Common myeloid progenitor, CD34-positive (primary cell): ENCODE measurements at regions of chr1 and their contacts with region 1.

Region 1: DNA sequence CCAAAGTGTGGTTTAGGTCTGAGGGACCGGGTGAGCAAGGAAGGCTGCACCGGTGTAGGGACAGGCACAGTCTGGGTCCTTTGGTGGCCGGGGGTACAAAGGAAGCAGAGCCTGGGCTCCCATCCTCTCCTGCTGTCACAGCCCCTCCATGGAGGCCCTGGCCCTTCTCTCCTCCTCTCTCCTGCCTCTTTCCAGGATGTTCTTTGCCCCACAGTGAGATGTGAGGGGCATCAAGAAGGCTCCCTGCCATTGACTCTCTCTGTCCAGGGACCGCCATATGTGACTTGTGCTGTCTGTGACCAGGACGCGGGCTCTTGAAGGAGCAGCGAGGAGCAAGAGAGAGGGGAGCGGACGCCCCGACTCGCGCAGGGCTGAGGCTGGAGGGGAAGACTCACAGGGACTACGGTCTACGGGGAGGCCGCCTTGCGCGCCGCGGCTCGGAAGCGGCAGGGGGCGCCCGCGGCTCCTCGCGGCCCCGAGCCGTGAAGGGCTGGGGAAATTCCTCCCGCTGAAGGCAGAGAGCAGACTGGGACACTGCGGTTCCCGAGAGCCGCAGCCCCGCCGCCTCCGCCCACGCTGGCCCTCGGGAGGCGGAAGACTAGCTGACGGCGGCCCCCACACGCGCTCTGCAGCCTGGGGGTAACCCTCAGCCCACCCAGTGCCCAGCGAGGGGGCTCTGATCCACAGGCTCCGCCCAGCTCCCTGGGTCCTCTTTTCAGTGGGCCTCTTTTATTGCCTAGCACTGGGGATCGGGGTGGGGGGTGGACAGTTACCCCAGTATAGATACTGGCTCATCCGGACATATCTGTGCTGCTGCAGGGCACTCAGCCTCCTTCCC is 40.8 kb downstream of the MAB21L3 start:
- DNase-seq: peak; percentile 77 to 90 (median 89)
- H3K4me3 ChIP-seq: peak overlapping the region; percentile 35 to 77 (median 59)
- H3K27ac ChIP-seq: no peak overlapping the region
- H3K4me1 ChIP-seq: peaks cover 0 to 7% (median 4%) of the 10 kb centered on the region in 4 experiments
- H3K27me3 ChIP-seq: peaks cover 0 to 3% (median 0%) of the 10 kb centered on the region in 5 experiments

Region 2: DNA sequence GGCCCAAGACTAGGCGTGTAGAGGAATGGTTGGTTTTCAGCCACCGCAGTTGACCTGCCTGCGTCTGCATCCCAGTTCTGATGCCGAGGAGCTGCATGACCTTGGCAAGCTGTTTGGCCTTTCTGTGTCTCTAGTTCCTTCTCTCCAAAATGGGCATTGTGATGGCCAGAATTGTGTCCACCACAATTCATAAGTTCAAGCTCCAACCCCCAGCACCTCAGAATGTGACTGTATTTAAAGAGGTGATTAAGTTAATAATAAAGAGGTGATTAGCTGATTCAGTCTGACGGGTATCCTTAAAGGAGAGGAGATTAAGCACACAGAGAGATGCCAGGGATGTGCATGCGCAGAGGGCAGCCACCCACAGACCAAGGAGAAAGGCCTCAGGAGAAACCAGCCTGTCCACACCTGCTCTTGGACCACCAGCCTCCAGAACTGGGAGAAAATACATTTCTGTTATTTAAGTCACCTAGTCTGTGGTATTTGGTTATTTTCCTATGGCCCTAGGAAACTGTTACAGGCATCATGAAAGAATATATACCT is 12.3 kb before region 1 on chr1:
- CTCF ChIA-PET with region 1: interaction called, 49 read pairs
- POLR2A ChIA-PET with region 1: no interaction called
- DNase-seq: no peak
- H3K4me3 ChIP-seq: no peak overlapping the region
- H3K27ac ChIP-seq: no peak overlapping the region
- H3K4me1 ChIP-seq: peaks cover 0 to 2% (median 0%) of the 10 kb centered on the region in 4 experiments
- H3K27me3 ChIP-seq: no peaks in the 10 kb centered on the region

Region 3: GRCh38 chr1:116168277-116169097 is 16.5 kb after region 1 on chr1:
- CTCF ChIA-PET with region 1: interaction called, 78 read pairs
- POLR2A ChIA-PET with region 1: no interaction called
- DNase-seq: peak; percentile 80 to 89 (median 89)
- H3K4me3 ChIP-seq: peak overlapping the region; percentile 37 to 85 (median 66)
- H3K27ac ChIP-seq: no peak overlapping the region
- H3K4me1 ChIP-seq: peaks cover 6 to 36% (median 22%) of the 10 kb centered on the region in 4 experiments
- H3K27me3 ChIP-seq: no peaks in the 10 kb centered on the region

Region 4: GRCh38 chr1:116498789-116499628 is 347.1 kb after region 1 on chr1:
- CTCF ChIA-PET with region 1: interaction called, 25 read pairs
- POLR2A ChIA-PET with region 1: no interaction called
- DNase-seq: peak; percentile 63 to 68 (median 66)
- H3K4me3 ChIP-seq: no peak overlapping the region
- H3K27ac ChIP-seq: no peak overlapping the region
- H3K4me1 ChIP-seq: peaks cover 9 to 53% (median 29%) of the 10 kb centered on the region in 4 experiments
- H3K27me3 ChIP-seq: no peaks in the 10 kb centered on the region